Natural killer cell (primary cell): ENCODE measurements at regions of chr1 and their contacts with region 1.

Region 1: GRCh38 chr1:155967341-155968050 is 10.9 kb downstream of the ARHGEF2 start:
- DNase-seq: peak in 1 of 2 donors; percentile 64
- ATAC-seq: peak; percentile 53 to 63 (median 60)
- H3K4me3 ChIP-seq: no peak overlapping the region
- H3K4me3 Mint-ChIP-seq: peak overlapping the region; percentile 69
- H3K27ac ChIP-seq: peak overlapping the region; percentile 55
- H3K27ac Mint-ChIP-seq: peak overlapping the region; percentile 89 to 90
- H3K4me1 ChIP-seq: peaks cover 82% of the 10 kb centered on the region
- H3K4me1 Mint-ChIP-seq: peaks cover 62 to 72% of the 10 kb centered on the region in 2 donors
- H3K27me3 ChIP-seq: no peaks in the 10 kb centered on the region
- H3K27me3 Mint-ChIP-seq: no peaks in the 10 kb centered on the region
- CTCF ChIP-seq: no peak

Region 2: DNA sequence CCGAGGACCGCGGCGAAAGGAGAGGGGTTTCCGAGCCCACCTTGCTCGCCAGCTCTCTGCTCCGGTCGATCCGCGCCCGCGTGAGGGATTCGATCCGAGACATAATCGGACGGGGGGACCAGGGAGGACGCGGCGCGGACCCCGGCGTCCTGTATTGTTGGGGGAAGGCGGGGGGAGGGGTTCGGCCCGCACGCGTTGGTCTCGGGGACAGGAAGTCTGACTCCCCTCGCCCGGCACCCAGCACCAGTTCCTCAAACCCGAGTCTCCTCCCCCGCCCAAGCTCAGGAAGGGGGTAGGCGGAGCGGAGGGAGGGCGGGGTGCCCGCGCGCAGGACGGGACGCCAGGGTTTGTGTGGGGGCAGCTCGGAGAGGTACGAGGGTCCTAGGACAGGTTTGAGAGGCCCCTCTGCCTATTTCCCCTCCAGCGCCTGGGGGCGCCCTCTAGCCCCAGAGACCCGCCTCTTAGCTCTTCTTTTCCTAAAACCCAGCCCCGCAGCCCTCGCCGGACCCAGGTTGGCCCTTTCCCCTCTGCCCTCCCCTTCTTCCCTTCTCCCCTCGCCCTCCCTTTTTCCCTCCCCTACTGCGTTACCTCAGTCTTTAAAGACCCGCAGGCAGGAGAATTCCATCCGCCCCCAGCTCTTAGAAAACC is 11.0 kb after region 1 on chr1 and contains the start of gene ARHGEF2:
- intact Hi-C with region 1: loop called (anchors 2 kb)
- DNase-seq: peak; percentile 67 to 83
- ATAC-seq: peak; percentile 55 to 75 (median 60)
- H3K4me3 ChIP-seq: peak within 1 kb of the TSS; percentile 96
- H3K4me3 Mint-ChIP-seq: peak within 1 kb of the TSS; percentile 92
- H3K27ac ChIP-seq: peak within 1 kb of the TSS; percentile 79
- H3K27ac Mint-ChIP-seq: peak within 1 kb of the TSS; percentile 90 to 94
- H3K4me1 ChIP-seq: peaks cover 83% of the 10 kb centered on the region
- H3K4me1 Mint-ChIP-seq: peaks cover 73 to 85% of the 10 kb centered on the region in 2 donors
- H3K27me3 ChIP-seq: no peaks in the 10 kb centered on the region
- H3K27me3 Mint-ChIP-seq: no peaks in the 10 kb centered on the region
- CTCF ChIP-seq: no peak
- total RNA-seq, gene ARHGEF2: 143 to 200 (median 147) TPM